Psoas muscle (tissue), 8 donors: ENCODE measurements at regions of chr20 and their contacts with region 1.

Region 1: DNA sequence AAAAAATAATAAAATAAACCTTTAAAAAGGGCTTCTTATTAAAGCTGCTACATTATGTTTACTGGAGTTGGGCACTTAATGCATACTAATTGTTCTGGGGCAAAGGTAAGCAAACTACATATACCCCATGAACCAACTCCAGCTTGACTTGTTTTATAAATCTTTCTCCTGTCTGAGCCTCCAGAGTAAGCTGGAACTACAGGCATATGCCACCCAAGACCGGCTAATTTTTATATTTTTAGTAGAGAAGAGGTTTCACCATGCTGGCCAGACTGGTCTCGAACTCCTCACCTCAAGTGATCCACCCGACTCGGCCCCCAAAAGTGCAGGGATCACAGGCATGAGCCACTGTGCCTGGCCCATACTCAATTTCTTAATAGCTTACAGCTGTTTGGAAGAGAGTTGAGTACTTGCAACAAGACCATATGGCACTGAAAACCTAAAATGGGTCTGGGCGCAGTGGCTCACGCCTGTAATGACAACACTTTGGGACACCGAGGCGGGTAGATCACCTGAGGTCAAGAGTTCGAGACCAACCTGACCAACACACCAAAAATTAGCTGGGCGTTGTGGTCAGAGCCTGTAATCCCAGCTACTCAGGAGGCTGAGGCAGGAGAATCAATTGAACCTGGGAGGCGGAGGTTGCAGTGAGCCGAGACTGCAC is 19.9 kb downstream of the ROMO1 start:
- DNase-seq: peak in 1 of 2 donors; percentile 66
- ATAC-seq: peak in 3 of 4 donors; percentile 44 to 71 (median 63)
- H3K4me3 ChIP-seq: no peak overlapping the region
- H3K27ac ChIP-seq: peak overlapping the region; percentile 57
- H3K4me1 ChIP-seq: peaks cover 85% of the 10 kb centered on the region
- H3K27me3 ChIP-seq: no peaks in the 10 kb centered on the region
- CTCF ChIP-seq: no peak

Region 2: DNA sequence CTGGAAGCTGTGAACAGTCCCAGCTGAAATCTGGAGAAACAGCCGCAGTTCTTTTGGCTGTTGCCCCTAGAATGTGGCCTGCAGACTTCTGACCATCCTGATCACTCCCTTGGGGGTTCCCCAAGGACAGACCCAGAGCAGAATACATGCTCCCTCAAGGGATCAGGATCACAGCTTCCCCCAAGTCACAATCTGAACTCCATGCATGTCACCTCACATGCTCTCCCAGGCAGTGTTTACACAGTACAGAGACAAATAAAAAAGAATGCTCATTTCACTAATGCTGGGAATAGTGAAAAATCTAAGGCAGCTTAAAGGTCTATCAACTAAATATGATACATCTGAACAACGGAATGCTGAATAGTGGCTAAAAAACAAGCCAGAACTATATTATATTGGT is 83.0 kb before region 1 on chr20:
- intact Hi-C with region 1: no loop called
- DNase-seq: no peak
- ATAC-seq: no peak
- H3K4me3 ChIP-seq: no peak overlapping the region
- H3K27ac ChIP-seq: no peak overlapping the region
- H3K4me1 ChIP-seq: peaks cover 31% of the 10 kb centered on the region
- H3K27me3 ChIP-seq: no peaks in the 10 kb centered on the region
- CTCF ChIP-seq: no peak

Region 3: GRCh38 chr20:35657271-35657670 is 61.8 kb before region 1 on chr20:
- intact Hi-C with region 1: loop called in 1 of 2 experiments (anchors 10 kb)
- DNase-seq: no peak
- ATAC-seq: no peak
- H3K4me3 ChIP-seq: no peak overlapping the region
- H3K27ac ChIP-seq: no peak overlapping the region
- H3K4me1 ChIP-seq: peaks cover 59% of the 10 kb centered on the region
- H3K27me3 ChIP-seq: no peaks in the 10 kb centered on the region
- CTCF ChIP-seq: no peak

Region 4: GRCh38 chr20:36113566-36114250 is 394.6 kb after region 1 on chr20:
- intact Hi-C with region 1: no loop called
- DNase-seq: no peak
- ATAC-seq: no peak
- H3K4me3 ChIP-seq: no peak overlapping the region
- H3K27ac ChIP-seq: no peak overlapping the region
- H3K4me1 ChIP-seq: no peaks in the 10 kb centered on the region
- H3K27me3 ChIP-seq: peaks cover 0 to 5% (median 1%) of the 10 kb centered on the region in 3 donors
- CTCF ChIP-seq: no peak